Activated CD4-positive, alpha-beta T cell treated with anti-CD3 and anti-CD28 coated beads, Interleukin-2, amount 10 ng/mL, durations not matched to agents 24 days and 14 days (primary cell): ENCODE measurements at regions of chr21 and their contacts with region 1.

Region 1: GRCh38 chr21:17925000-17925610 is 105.9 kb upstream of the C21orf91 start:
- DNase-seq: peak; percentile 85
- H3K4me3 Mint-ChIP-seq: no peak overlapping the region
- H3K27ac Mint-ChIP-seq: no peak overlapping the region
- H3K4me1 Mint-ChIP-seq: no peaks in the 10 kb centered on the region
- H3K27me3 Mint-ChIP-seq: peaks cover 3% of the 10 kb centered on the region

Region 2: GRCh38 chr21:17679002-17679600 is 246.0 kb before region 1 on chr21:
- intact Hi-C with region 1: loop called (anchors 1 kb)
- DNase-seq: peak; percentile 78
- H3K4me3 Mint-ChIP-seq: no peak overlapping the region
- H3K27ac Mint-ChIP-seq: no peak overlapping the region
- H3K4me1 Mint-ChIP-seq: no peaks in the 10 kb centered on the region
- H3K27me3 Mint-ChIP-seq: peaks cover 4% of the 10 kb centered on the region

Region 3: DNA sequence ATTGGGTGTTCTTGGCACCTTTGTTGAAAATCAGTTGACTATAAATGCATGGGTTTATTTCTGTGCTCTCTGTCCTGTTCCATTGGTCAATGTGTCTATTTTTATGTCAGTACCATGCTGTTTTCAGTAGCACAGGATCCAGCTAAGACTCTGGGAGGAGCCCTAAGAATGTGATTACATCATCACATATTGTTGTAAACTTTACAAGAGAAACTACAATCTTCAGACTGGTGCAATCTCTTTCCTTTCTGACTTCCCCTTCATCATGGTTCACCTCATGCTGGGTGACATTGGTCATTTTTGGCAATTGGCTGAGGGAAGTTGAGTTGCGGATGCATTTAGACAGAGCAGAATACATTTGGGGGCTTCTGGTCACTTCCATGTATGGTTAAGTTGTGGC is 194.3 kb before region 1 on chr21:
- intact Hi-C with region 1: no loop called
- DNase-seq: no peak
- H3K4me3 Mint-ChIP-seq: no peak overlapping the region
- H3K27ac Mint-ChIP-seq: no peak overlapping the region
- H3K4me1 Mint-ChIP-seq: peaks cover 4% of the 10 kb centered on the region
- H3K27me3 Mint-ChIP-seq: peaks cover 6% of the 10 kb centered on the region